Activated CD4-positive, alpha-beta T cell treated with anti-CD3 and anti-CD28 coated beads for 36 hours (primary cell): ENCODE measurements at regions of chr17 and their contacts with region 1.

Region 1: DNA sequence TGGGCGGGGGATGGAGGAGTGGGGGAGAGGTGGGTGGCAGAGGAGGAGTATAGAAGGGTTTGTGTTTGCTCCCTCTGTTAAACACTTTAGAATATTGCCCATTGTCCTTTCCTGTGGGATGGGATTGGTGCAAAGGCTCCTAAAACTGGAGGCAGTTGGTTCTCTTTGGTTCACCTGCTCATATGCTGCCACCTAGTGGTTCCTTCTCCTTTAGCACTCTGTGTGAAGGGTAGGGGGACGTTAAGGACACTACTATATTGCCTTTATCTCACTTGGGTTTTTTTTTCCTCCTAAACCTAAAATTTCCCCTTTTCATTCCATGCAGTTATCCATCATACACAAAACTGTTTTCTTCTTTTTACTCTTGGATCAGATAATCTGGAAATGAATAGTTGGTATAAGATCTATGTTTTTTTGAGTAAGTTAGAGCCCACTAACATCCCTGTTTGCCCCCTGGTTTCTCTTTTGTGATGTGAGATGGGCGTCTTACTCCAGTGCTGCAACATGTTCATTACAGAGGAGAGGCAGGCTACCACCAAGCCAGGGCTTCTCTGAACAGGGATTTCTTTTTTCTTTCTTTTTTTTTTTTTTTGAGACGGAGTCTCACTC is 23.8 kb downstream of the SNX11 start:
- DNase-seq: peak; percentile 68
- ATAC-seq: peak; percentile 85
- H3K4me3 Mint-ChIP-seq: no peak overlapping the region
- H3K27ac Mint-ChIP-seq: peak overlapping the region; percentile 2
- H3K4me1 Mint-ChIP-seq: no peaks in the 10 kb centered on the region
- H3K27me3 Mint-ChIP-seq: no peaks in the 10 kb centered on the region

Region 2: DNA sequence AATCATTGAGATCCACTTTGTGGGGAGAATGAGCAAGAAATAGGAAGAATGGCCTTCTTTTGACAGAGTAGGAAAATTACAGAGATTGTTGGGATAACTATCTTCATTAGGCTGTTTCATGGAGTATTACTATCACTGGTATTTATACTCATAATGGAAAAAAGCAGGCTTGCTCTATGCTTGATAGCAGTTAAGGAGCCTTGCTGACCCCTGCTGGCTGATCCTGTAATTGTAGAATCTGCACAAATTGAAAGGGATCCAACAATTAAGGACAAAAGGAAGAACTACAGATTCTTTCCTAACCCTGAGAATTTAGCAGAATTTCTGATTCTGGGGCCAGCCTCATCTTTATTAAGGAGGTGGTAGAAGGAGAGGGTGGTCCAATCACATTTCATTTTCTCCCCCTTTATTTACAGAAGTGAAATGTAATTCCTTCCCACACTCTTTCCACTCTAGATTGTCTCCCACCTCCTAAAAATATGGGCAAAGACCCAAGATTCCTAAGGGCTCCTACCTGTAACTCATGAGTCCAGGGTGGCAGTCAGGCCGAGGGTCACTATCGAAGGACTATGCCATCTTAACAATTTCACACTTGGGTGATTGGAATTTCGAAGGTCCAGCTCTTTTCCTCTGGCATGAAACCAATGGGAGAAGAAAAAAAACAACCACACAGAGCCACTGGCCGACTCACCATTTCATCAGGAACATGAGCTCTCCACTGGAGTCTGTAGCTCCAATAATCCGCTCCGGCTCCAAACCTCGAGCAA is 56.8 kb before region 1 on chr17:
- CTCF ChIA-PET with region 1: interaction called, 29 read pairs
- POLR2A ChIA-PET with region 1: no interaction called
- intact Hi-C with region 1: no loop called
- DNase-seq: peak; percentile 86
- ATAC-seq: peak; percentile 75
- H3K4me3 Mint-ChIP-seq: no peak overlapping the region
- H3K27ac Mint-ChIP-seq: no peak overlapping the region
- H3K4me1 Mint-ChIP-seq: no peaks in the 10 kb centered on the region
- H3K27me3 Mint-ChIP-seq: no peaks in the 10 kb centered on the region